Cardiac septum (tissue), 1 donor: ENCODE measurements at regions of chr19 and their contacts with region 1.

Region 1: DNA sequence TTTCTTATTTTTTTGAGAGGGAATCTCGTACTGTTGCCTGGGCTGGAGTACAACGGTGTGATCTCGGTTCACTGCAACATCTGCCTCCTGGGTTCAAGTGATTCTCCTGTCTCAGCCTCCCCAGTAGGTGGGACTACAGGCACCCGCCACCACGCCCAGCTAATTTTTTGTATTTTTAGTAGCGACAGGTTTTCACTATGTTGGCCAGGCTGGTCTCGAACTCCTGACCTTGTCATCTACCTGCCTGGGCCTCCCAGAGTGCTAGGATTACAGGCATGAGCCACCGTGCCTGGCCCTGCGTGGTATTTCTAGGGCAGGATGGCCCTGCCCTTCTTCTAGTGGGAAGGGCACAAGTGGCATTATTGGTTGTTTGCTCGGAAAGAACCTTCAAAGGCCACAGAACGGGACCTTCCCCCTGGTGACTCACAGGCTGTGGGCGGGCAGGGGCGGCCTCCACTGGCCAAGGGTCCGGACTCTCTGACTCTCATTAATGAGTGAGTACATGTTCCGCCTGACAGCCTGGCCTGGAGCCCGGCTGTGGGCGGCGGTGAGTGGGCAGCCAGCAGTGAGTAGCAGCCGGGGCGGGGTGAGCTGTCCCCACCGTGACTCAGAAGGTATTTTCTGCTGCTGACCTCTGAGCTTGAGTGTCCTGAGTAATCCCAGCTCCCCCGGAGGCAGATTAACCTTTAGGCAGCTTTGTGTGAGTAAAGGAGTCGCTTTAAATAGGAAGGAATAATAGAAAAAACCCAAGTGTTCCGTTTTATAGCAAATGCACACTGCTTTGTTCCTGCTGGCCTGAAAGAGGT is 5.1 kb downstream of the DOT1L start:
- DNase-seq: peak; percentile 98

Region 2: DNA sequence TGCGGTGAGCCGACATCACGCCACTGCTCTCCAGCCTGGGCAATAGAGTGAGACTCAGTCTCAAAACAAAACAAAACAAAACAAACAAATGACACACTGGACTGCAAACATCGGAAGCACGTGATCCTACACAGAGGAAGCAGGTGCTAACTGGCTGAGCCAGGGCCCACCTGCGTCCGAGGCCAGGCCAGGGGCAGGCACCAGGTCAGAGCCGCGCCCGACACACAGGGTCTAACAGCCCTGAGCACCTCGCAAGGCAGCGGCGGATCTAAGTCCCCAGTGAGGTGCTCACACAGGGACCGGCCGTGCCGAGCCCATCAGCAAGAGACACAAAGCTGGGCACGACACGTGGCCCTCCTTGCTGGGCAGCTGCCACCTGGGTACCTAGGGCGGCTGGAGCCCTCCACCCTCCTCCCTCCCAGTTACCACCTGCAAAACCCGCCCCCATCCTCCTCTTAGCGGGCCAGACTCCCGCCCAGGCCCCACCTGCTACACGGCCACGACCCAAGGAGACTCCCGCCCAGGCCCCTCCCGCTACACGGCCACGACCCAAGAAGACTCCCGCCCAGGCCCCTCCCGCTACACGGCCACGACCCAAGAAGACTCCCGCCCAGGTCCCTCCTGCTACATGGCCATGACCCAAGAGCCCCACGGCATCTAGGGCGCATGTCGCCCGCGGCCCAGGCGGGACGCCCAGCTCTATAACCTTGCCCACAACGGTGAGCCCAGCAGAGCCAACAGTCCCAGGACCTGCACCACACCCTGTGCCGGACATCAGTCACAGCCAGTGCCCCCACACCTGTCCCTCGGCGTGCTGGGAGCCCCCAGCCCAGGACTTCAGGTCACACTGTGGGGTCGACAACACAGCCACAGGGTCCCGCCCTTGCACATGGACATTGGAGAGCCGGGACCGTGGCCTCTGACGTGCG is 33.1 kb before region 1 on chr19:
- intact Hi-C with region 1: no loop called
- DNase-seq: no peak

Region 3: DNA sequence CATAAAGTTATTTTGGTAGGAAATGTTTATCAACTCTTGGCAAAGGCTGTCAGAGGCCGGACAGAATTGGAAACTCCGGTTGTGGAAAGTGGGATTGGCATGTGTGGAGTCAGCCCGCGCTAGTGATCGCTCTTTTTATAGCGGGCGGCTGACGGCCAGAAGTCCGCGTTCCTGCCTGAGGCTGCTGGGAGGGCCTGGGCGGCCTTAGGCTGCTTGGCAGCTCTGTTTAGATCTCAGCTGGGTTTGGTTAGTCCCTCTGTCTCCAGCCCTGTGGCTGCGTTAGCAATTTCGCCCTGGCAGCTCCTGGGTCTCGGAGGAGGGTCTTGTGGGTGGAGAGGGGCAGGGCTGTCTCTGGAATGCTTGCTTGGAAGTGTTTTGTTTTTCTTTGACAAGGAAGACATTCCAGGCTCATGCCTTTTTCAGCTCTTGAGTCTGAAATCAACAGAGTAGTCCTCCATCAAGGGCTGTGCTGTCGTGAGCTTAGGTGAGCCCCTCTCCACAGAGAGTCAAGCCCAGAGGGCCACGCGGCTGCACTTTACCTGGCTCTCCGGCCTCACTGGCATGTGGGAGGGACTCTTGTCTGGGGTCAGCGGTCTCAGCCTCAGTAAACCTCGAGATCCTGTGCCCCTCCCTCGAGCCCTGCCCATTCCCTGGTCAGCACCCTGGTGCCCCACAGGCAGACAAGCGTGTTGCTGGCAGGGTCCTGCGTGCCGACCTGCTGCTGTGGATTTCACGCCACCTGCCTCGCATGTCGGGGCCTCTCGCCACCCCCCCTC is 17.4 kb after region 1 on chr19:
- intact Hi-C with region 1: loop called (anchors 1 kb)
- DNase-seq: peak; percentile 91

Region 4: GRCh38 chr19:2328401-2329148 is 159.8 kb after region 1 on chr19 and contains the starts of genes LSM7 and SPPL2B:
- intact Hi-C with region 1: loop called (anchors 5 kb)
- DNase-seq: peak; percentile 95
- total RNA-seq, gene LSM7: 42.7 TPM
- total RNA-seq, gene SPPL2B: 27.4 TPM

Region 5: DNA sequence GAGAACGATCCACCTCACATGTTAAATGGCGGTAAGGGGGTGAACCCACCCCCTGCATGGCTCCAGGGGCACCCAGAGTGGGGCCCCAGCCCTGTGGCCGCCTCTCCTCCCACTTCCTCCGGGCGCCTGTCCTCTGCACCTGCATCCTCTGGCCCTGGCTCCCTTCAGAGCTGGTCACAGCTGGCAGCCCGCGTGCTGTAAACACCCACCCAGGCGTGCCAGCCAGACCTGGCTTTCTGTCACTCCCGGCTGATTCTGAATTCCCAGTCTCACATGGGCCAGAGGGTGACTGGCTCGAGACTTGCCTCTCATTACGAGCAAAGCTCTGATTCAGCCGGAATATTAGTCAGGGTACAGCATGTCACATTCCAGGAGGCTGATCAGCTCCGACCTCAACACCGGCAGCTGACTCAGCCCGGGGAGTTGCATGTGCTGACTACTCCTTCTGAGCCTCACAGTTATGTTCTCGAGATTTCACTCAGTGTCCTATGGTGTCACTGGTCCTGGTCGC is 458.6 kb after region 1 on chr19:
- intact Hi-C with region 1: loop called (anchors 10 kb)
- DNase-seq: peak; percentile 88